Common myeloid progenitor, CD34-positive (primary cell): ENCODE measurements at regions of chr5 and their contacts with region 1.

Region 1: GRCh38 chr5:1140171-1140817 is 28.4 kb upstream of the SLC12A7 start:
- DNase-seq: peak; percentile 74 to 87 (median 87)
- H3K4me3 ChIP-seq: no peak overlapping the region
- H3K27ac ChIP-seq: no peak overlapping the region
- H3K4me1 ChIP-seq: peaks cover 0 to 28% (median 10%) of the 10 kb centered on the region in 4 experiments
- H3K27me3 ChIP-seq: no peaks in the 10 kb centered on the region

Region 2: GRCh38 chr5:923281-923873 is 216.9 kb before region 1 on chr5:
- CTCF ChIA-PET with region 1: interaction called, 22 read pairs
- POLR2A ChIA-PET with region 1: no interaction called
- DNase-seq: peak; percentile 66 to 80 (median 78)
- H3K4me3 ChIP-seq: no peak overlapping the region
- H3K27ac ChIP-seq: no peak overlapping the region
- H3K4me1 ChIP-seq: peaks cover 0 to 9% (median 6%) of the 10 kb centered on the region in 4 experiments
- H3K27me3 ChIP-seq: peaks cover 6 to 33% (median 13%) of the 10 kb centered on the region in 5 experiments

Region 3: GRCh38 chr5:1004461-1005248 is 135.6 kb before region 1 on chr5:
- CTCF ChIA-PET with region 1: interaction called, 18 read pairs
- POLR2A ChIA-PET with region 1: no interaction called
- DNase-seq: peak; percentile 64 to 70 (median 65)
- H3K4me3 ChIP-seq: peak overlapping the region; percentile 19 to 64 (median 44)
- H3K27ac ChIP-seq: no peak overlapping the region
- H3K4me1 ChIP-seq: peaks cover 0 to 33% (median 21%) of the 10 kb centered on the region in 4 experiments
- H3K27me3 ChIP-seq: peaks cover 0 to 72% (median 36%) of the 10 kb centered on the region in 5 experiments

Region 4: DNA sequence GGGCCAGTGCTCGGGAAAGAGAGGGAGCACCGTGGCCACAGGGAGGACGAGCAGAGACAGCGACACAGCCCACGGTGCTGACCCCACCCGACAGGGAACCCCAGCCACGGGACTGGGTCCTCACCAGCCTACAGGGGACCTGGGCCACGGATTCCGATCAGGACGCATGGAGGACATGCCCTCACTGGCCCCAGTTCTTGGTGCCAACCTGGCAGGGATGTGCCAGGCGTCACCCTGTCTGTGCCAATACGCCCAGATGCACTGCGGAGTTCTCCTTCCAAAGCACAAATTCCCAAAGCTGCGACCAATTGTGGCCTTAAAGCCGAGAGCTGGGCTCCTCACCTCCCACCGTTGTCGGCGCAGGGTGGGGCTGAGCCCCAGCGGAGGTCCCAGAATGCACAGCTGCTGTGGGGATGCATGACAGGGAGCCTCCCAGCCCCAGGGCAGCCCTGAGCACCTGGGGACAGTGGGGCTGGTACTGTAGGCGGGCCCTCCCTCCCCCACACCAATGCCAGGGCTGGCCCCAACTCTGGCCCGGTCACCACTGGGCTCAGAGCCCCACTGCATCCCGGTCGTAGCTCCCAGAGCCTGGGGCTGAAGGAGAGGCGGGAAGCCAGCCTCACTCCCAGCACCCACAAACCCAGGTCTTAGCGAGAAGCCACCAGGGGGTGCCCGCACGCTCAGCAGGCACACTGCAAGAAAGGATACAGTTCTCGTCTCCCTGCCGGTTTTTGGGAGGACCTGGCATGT is 87.5 kb before region 1 on chr5:
- CTCF ChIA-PET with region 1: interaction called, 10 read pairs
- POLR2A ChIA-PET with region 1: no interaction called
- DNase-seq: peak in 2 of 3 donors; percentile 6 to 17
- H3K4me3 ChIP-seq: no peak overlapping the region
- H3K27ac ChIP-seq: no peak overlapping the region
- H3K4me1 ChIP-seq: no peaks in the 10 kb centered on the region
- H3K27me3 ChIP-seq: no peaks in the 10 kb centered on the region

Region 5: DNA sequence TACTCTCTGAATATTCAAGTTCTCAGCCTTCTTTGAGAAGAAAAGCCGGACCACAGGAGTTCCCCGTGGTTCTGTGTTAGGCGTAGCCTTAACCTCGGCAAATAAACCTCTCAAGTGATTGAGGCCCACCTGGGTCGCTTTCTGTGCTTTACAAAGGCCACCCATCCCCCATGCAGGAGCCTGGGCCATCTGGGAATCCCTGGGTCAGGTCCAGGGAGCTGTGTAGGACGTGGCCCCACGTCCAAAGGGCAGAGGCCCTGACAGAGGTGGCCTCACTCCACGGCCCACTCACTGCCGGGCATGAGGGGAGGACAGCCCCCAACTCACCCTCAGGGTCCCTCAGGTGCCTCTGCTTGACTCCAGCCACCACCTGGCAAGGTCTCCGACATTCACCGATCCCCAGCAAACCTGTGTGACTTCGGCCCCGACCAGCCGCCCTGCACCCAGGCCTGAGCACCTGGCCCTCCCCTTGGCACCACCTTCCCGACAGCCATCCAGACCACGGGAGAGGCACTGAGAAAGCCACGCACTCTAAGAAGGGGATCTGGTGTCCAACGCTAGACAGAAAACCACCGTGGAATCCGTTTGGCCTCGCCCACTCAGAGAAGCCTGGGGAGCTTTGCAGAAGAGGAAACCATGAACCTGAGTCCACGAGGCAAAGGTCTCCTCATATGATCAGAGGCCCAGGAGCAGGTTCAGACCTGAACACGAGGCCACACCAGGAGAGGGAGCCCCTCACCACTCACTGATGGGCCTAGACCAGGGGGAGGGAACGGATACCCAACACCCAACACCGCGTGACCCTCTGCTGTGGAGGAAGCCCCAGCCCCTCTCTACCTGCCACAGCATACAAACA is 32.9 kb before region 1 on chr5:
- CTCF ChIA-PET with region 1: interaction called, 11 read pairs
- POLR2A ChIA-PET with region 1: no interaction called
- DNase-seq: peak in 2 of 3 donors; percentile 35 to 71
- H3K4me3 ChIP-seq: peak overlapping the region in 4 of 7 experiments; percentile 15 to 87 (median 54)
- H3K27ac ChIP-seq: peak overlapping the region in 1 of 2 experiments; percentile 94
- H3K4me1 ChIP-seq: peaks cover 2 to 90% (median 86%) of the 10 kb centered on the region in 4 experiments
- H3K27me3 ChIP-seq: no peaks in the 10 kb centered on the region

Region 6: GRCh38 chr5:1152156-1152555 is 11.9 kb after region 1 on chr5:
- CTCF ChIA-PET with region 1: interaction called, 48 read pairs
- POLR2A ChIA-PET with region 1: no interaction called
- DNase-seq: no peak
- H3K4me3 ChIP-seq: no peak overlapping the region
- H3K27ac ChIP-seq: no peak overlapping the region
- H3K4me1 ChIP-seq: peaks cover 0 to 4% (median 0%) of the 10 kb centered on the region in 4 experiments
- H3K27me3 ChIP-seq: peaks cover 0 to 60% (median 25%) of the 10 kb centered on the region in 5 experiments

Region 7: DNA sequence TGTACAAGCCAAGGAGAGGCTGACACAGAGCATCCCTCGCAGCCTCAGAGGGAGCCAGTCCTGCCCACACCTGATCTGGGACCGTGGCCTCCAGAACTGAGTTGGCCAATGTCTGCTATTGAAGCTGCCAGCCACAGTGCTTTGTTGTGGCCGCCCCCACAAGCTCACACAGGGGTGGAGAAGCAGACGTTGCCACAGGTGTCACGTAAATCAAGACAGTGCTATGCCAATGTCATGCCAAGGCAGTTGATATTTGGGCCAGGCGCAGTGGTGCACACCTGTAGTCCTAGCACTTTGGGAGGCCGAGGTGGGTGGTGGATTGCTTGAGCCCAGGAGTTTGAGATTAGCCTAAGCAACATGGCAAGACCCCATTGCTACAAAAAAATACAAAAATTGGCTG is 171.9 kb after region 1 on chr5:
- CTCF ChIA-PET with region 1: no interaction called
- POLR2A ChIA-PET with region 1: no interaction called
- DNase-seq: peak in 2 of 3 donors; percentile 12 to 35
- H3K4me3 ChIP-seq: no peak overlapping the region
- H3K27ac ChIP-seq: no peak overlapping the region
- H3K4me1 ChIP-seq: peaks cover 0 to 44% (median 34%) of the 10 kb centered on the region in 4 experiments
- H3K27me3 ChIP-seq: no peaks in the 10 kb centered on the region

Region 8: DNA sequence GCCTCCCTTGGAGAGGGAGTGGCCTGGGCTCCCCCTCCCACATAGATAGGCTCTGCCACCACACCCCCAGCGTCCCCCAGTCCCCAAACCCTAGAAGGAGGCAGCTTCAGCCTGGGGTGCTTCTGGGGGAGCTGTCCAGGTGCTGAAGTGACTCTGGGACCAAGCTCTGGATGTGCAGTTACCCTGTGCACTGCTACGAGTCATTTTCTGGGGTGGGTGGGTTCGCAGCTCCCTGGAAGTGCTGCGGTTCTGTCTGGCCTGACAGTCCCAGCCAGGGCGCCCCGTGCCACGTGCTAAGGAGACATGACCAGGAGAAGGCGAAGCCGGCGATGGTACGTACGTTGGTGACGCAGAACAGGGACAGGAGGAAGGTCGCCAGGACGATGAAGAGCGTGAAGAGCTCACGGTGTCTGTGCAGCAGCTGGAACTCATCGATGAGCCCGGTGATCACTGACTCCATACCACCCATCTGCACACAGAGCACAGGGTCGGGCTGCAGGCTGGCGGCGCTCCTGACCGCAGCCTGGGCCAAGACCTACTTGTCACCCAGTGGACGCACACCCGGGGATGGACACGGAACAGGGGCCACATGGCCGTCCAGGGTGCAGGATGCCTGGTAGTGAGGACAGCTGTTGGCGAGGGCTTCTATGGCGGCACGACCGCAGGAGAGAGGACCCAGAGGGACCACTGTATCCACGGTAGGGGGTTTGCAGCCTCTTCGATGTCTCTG is 269.3 kb after region 1 on chr5:
- CTCF ChIA-PET with region 1: no interaction called
- POLR2A ChIA-PET with region 1: no interaction called
- DNase-seq: peak; percentile 64 to 87 (median 85)
- H3K4me3 ChIP-seq: no peak overlapping the region
- H3K27ac ChIP-seq: no peak overlapping the region
- H3K4me1 ChIP-seq: peaks cover 0 to 12% (median 6%) of the 10 kb centered on the region in 4 experiments
- H3K27me3 ChIP-seq: peaks cover 0 to 25% (median 3%) of the 10 kb centered on the region in 5 experiments